Activated T-helper 2 cell treated with anti-CD3 and anti-CD28 coated beads, Interferon-gamma antibody, Interleukin-2, Interleukin-4, amounts not matched to agents 10 μg/mL and 5 μg/mL and 100 μg/mL, durations not matched to agents 14 hours and 24 hours and 36 hours (primary cell): ENCODE measurements at regions of chr3 and their contacts with region 1.

Region 1: GRCh38 chr3:150408221-150409102 is at the start of gene TSC22D2:
- DNase-seq: peak; percentile 92
- H3K4me3 Mint-ChIP-seq: peak within 1 kb of the TSS; percentile 93
- H3K27ac Mint-ChIP-seq: peak within 1 kb of the TSS; percentile 90
- H3K4me1 Mint-ChIP-seq: peaks cover 26% of the 10 kb centered on the region
- H3K27me3 Mint-ChIP-seq: peaks cover 7% of the 10 kb centered on the region
- total RNA-seq, gene TSC22D2: 20.3 and 21.3 TPM in 2 replicates

Region 2: DNA sequence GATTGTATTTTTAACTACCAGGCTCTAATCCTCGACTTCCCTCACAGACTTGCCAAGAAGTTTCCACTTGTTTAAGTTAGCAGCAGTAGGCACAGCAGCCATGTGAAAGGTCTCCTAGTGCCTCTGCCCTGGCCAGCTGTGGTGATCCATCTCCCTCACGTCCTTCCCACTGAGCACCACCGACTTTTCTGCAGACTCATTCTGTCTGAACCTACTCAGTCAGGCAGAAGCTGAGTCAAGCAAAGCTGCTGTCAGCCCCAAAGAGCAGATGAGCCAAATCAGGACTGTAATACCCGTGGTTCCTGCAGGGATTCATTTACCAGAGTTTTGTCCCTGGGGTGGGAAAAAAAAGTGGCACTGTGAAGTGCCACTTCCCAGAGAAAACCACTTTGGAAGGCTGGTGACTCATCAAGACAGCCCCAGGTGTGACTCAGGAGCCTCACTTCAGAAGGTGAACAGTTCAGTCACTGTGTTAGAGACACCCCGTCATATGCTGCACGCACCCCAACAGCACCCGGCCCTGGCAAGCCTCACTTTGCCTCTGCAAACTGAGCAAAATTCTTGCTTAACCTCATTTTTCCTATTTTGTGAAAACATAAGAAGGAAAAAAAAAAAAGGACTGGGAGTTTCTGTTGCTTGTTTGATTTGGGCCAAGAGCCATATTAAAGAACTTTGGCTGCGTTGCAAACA is 826.6 kb before region 1 on chr3:
- intact Hi-C with region 1: no loop called
- DNase-seq: no peak
- H3K4me3 Mint-ChIP-seq: no peak overlapping the region
- H3K27ac Mint-ChIP-seq: no peak overlapping the region
- H3K4me1 Mint-ChIP-seq: peaks cover 29% of the 10 kb centered on the region
- H3K27me3 Mint-ChIP-seq: peaks cover 16% of the 10 kb centered on the region

Region 3: DNA sequence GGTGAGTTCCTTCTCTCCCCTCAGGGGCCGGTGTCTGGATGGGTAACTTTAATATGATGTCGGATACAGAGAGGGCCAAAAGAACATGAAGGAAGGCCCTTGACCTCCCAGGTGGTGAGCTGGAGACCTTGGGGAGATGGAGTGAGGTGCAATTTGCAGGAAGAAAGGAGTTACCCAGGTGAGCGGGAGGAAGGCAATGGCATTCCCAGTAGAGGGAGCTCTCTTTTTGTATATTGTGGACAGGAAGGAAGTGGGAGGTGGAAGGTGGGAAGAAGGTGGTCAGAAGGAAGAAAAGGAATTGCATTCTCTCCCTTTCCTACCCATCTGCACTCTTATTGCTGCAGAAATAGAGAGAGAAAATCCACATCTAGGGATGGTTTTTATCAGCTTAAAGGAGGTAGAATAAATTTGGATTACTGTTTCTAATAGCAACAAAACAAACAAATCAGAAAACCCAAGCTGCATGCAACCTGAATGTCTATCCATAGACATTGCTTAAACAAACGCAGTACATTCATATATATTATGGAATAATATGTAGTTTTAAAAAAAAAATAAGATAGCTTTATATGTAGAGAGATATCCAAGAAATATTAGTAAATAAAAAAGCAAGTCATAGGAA is 169.4 kb before region 1 on chr3:
- intact Hi-C with region 1: no loop called
- DNase-seq: no peak
- H3K4me3 Mint-ChIP-seq: no peak overlapping the region
- H3K27ac Mint-ChIP-seq: no peak overlapping the region
- H3K4me1 Mint-ChIP-seq: no peaks in the 10 kb centered on the region
- H3K27me3 Mint-ChIP-seq: peaks cover 11% of the 10 kb centered on the region

Region 4: DNA sequence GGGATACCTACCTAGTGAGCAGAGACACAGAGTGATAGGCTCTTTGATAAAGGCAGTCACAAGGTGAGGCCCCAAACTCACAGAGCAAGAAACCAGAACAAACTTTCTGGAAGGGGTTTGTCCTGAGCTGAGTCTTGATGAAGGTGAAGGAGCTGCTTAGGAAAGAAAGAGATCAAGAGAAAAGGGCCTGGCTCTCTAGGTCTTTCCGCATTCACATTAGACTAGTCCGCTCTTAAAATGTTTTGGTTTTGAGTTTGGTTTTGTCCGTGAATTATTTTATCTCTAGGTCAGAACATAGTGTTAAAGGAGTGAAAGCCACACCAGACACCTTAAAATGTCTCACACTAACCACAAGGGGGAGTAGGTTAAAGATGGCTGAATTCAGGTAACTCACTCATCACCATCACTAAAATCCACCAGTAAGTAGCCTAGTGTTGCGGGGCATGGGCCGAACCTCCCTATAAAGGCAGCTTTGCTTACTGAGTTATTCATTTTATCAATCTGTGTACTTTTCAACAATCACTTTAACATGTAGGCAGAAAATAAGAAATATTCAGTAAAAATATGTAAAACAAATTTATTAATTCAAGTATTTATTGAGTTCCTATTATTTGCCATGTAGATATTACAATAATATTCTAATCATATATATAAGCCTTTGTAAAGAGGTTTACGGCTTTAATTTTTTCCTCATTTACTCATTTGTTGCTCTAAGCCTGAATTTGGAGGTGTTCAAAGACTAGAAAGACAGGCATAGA is 121.9 kb before region 1 on chr3:
- intact Hi-C with region 1: loop called (anchors 5 kb)
- DNase-seq: no peak
- H3K4me3 Mint-ChIP-seq: no peak overlapping the region
- H3K27ac Mint-ChIP-seq: no peak overlapping the region
- H3K4me1 Mint-ChIP-seq: no peaks in the 10 kb centered on the region
- H3K27me3 Mint-ChIP-seq: peaks cover 58% of the 10 kb centered on the region

Region 5: DNA sequence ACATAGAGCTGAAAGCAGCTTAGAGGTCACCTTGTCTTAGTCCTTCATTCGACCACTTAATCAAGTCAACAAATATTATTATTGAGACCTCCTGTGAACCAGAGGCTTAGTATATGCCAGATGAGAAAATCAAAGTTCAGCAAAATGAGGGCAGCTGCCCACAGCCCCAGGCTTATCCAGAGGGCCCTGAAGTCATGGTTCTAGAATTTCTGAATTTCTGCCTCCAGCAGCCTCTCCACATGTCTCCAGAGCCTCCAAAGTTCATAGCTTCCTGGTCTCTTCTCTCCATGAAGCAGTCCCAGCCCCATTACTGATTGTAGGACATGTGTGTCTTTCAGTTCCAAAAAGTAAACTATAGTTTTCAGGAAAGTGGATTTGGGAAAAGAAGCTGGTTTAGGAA is 97.3 kb before region 1 on chr3:
- intact Hi-C with region 1: no loop called
- DNase-seq: no peak
- H3K4me3 Mint-ChIP-seq: no peak overlapping the region
- H3K27ac Mint-ChIP-seq: no peak overlapping the region
- H3K4me1 Mint-ChIP-seq: no peaks in the 10 kb centered on the region
- H3K27me3 Mint-ChIP-seq: peaks cover 38% of the 10 kb centered on the region

Region 6: DNA sequence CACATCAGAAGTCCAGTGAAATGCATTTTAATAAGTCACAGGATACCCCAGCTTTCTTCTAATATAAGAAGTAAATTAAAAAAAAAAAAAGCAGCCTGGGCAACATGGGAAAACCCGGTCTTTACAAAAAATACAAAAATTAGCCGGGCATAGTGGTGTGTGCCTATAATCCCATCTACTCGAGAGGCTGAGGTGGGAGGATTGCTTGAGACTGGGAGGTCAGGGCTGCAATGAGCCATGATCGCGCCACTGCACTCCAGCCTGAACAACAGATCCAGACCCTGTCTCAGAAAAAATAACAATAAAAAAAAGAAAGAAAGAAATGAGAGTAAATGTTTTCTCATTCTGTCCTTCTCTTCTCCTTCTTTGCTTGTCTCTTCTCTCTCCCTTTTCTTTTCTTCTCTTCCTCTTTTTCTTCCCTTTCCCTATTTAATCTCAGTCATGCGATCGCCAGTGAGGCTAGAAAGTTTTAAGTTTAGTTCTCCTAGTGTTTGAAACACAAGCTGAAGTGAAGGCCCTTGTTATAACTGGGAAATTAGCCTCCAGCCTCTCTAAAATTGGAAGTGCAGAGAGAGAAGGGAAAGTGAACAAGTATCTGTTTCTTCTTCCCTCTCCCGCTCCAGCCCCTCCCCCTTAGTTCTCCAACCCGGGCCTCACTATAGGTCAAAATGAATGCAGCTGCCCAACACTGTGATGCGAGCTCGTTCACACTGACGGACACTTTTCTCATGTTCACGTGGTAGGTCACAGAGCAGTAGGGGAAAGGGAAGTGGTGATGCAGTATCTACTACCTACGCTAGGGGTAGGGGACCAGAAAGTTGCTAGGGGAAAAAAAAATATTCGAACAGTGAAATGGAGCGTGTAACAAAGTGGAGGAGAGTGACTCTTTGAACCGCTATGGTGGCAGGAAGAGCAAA is 23.9 kb before region 1 on chr3:
- intact Hi-C with region 1: loop called (anchors 1 kb)
- DNase-seq: peak; percentile 40
- H3K4me3 Mint-ChIP-seq: peak overlapping the region; percentile 75
- H3K27ac Mint-ChIP-seq: peak overlapping the region; percentile 91
- H3K4me1 Mint-ChIP-seq: peaks cover 32% of the 10 kb centered on the region
- H3K27me3 Mint-ChIP-seq: peaks cover 2% of the 10 kb centered on the region

Region 7: DNA sequence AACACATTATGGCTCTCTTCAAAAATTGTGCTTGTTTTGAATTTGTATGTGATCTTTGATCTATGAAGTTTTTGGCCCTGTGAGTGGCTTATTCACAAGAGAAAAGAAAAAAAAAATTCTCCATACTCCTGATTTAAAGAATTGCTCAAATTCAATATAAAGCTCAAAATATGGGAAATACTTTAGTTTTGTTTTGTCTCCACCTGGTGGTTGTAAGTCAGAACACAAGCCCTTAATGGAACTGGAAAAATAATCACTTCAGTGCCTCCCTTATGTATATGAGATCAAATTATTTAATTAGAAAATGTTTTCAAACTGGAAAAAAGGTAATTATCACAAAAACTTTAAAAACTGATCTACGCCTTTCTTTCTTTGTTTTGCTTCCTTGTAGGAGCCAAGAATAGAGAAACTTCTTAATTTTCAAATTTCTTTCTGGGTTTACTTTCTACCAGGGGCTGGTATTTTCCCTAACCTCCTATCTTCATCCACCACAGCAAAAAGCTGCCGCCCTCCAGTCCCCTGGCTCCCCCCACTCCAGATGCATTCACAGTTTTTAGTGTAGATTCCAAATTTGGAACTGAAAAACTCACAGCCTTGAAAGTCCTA is 87.2 kb after region 1 on chr3:
- intact Hi-C with region 1: loop called (anchors 2 kb)
- DNase-seq: no peak
- H3K4me3 Mint-ChIP-seq: no peak overlapping the region
- H3K27ac Mint-ChIP-seq: no peak overlapping the region
- H3K4me1 Mint-ChIP-seq: no peaks in the 10 kb centered on the region
- H3K27me3 Mint-ChIP-seq: peaks cover 4% of the 10 kb centered on the region

Region 8: GRCh38 chr3:150603153-150603979 is 194.9 kb after region 1 on chr3 and contains the start of gene SELENOT:
- intact Hi-C with region 1: loop called (anchors 5 kb)
- DNase-seq: peak; percentile 95
- H3K4me3 Mint-ChIP-seq: peak within 1 kb of the TSS; percentile 94
- H3K27ac Mint-ChIP-seq: peak within 1 kb of the TSS; percentile 97
- H3K4me1 Mint-ChIP-seq: peaks cover 56% of the 10 kb centered on the region
- H3K27me3 Mint-ChIP-seq: no peaks in the 10 kb centered on the region
- total RNA-seq, gene SELENOT: 119 and 121 TPM in 2 replicates

Region 9: DNA sequence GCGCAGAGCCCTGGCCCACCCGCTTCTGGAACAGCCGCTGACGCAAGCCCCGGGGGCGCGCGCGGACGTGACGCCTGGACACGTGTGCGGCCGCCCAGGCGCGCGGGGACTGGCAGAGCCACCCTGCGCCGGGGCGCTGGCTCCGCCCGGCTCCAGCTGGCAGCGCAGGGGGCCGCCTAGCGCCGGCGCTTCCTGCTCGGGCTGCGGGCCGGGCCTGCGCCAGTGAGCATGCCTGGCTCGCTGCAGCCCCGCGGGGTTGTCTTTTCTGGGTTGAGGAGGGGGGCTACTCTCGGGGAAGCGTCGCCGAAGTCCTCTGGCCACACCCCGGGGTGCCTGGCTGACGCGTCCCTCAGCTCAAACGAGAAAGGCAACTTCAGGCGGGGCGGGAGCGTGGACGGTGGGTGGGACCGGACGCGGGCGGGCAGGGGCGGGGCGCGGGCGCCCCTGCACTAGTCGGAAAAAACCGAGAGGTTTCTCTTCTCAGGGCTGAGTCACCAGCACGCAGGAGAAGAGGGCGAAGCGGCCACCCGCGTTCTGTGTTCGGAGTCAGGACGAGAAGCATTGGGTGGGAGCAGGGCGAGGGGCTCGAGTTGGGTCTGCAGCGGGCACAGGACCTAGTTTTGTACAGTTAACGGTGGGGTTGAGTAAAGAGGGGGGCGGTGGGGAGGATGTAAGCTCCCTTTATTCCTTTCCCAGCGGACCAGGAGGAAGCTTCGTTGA is 354.8 kb after region 1 on chr3 and contains the start of gene SIAH2:
- intact Hi-C with region 1: loop called (anchors 1 kb)
- DNase-seq: peak; percentile 91
- H3K4me3 Mint-ChIP-seq: peak within 1 kb of the TSS; percentile 100
- H3K27ac Mint-ChIP-seq: peak within 1 kb of the TSS; percentile 100
- H3K4me1 Mint-ChIP-seq: peaks cover 50% of the 10 kb centered on the region
- H3K27me3 Mint-ChIP-seq: no peaks in the 10 kb centered on the region
- total RNA-seq, gene SIAH2: 108 and 116 TPM in 2 replicates

Region 10: GRCh38 chr3:151203051-151203420 is 794.6 kb after region 1 on chr3 and contains the start of gene GPR171:
- intact Hi-C with region 1: loop called (anchors 5 kb)
- DNase-seq: peak; percentile 70
- H3K4me3 Mint-ChIP-seq: peak within 1 kb of the TSS; percentile 91
- H3K27ac Mint-ChIP-seq: peak within 1 kb of the TSS; percentile 95
- H3K4me1 Mint-ChIP-seq: peaks cover 52% of the 10 kb centered on the region
- H3K27me3 Mint-ChIP-seq: no peaks in the 10 kb centered on the region
- total RNA-seq, gene GPR171: 232 TPM in 2 replicates